ENCODE measurements at regions of chr2 and their contacts with region 1.

Region 1: GRCh38 chr2:157777427-157777826 is 98.7 kb downstream of the ACVR1 start:
- DNase-seq: no peak

Region 2: DNA sequence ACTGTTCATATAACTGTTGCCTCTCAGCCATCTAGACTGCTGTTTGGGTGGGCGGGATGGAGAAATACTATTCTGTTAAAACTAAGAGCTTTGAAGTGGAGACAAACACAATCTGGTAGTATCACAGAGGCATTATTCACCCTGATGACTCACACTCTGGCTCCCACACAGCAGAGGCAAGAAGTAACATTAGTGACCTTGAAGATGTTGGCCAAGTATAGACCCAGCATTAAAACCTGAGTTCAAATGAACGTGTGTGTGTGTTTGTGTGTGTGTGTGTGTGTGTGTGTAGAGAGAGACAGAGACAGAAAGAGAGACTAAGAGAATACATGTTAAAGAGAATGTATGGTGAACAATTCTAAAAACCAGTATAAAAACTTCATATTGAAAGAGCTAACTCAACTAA is 121.2 kb after region 1 on chr2:
- in situ Hi-C with region 1: no loop called
- DNase-seq: peak; percentile 38

Region 3: DNA sequence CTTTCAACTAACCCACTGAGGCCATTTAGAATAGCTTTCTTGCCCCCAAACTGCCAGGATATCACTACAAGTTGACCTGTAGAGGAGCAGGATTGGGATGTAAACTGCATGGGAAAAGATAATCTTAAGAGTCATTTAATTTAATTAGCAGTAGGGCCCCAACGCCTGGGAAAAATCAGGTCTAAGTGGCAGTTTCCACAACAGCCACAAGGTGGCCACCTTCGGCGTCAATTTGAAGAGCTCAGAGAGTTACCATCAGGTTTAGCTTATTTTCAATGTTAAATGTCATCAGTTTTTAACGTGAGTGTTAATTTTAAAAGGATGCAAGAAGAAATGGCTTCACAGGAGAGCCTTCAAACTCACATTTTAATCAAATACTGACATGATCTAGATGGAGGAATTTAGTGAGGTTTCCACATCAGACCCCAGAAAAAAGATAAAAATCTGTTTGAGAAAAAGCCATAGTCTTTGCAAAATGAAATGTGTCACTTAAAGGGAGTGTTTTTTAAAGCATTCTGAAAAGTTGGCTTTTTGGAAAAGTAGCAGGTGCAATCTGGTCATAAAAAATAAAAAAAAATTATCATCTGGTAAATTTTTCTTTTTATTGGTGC is 247.0 kb after region 1 on chr2:
- in situ Hi-C with region 1: loop called (anchors 25 kb)
- DNase-seq: peak; percentile 32